MCF 10A (cell line): ENCODE measurements at regions of chr1 and their contacts with region 1.

Region 1: GRCh38 chr1:182143154-182143657 is 81.7 kb upstream of the ZNF648 start:
- DNase-seq: peak; percentile 94
- H3K4me3 Mint-ChIP-seq: peak overlapping the region; percentile 28
- H3K27ac Mint-ChIP-seq: peak overlapping the region; percentile 97
- H3K4me1 Mint-ChIP-seq: peaks cover 53% of the 10 kb centered on the region
- H3K27me3 Mint-ChIP-seq: no peaks in the 10 kb centered on the region
- CTCF ChIP-seq: peak; percentile 95

Region 2: DNA sequence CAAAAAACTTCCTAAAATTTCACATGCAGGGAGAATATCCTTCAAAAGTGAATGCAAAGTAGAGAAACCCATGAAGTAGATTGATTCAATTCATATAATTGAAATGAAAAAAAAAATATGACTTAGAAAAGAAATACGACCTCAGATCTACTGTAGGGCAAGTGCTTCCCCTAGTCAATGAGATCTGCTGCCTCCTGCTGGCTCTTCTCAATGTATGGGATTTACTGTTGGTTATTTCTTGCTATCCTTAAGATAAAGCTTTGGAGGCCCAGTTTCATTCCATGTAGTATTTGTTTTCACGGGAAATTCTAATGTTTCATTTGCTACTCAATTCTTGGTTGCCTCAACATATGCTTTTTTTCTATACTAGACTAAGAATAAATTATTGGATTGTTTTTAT is 127.8 kb before region 1 on chr1:
- CTCF ChIA-PET with region 1: no interaction called
- POLR2A ChIA-PET with region 1: no interaction called
- intact Hi-C with region 1: no loop called
- DNase-seq: no peak
- H3K4me3 Mint-ChIP-seq: no peak overlapping the region
- H3K27ac Mint-ChIP-seq: no peak overlapping the region
- H3K4me1 Mint-ChIP-seq: no peaks in the 10 kb centered on the region
- H3K27me3 Mint-ChIP-seq: no peaks in the 10 kb centered on the region
- CTCF ChIP-seq: no peak

Region 3: DNA sequence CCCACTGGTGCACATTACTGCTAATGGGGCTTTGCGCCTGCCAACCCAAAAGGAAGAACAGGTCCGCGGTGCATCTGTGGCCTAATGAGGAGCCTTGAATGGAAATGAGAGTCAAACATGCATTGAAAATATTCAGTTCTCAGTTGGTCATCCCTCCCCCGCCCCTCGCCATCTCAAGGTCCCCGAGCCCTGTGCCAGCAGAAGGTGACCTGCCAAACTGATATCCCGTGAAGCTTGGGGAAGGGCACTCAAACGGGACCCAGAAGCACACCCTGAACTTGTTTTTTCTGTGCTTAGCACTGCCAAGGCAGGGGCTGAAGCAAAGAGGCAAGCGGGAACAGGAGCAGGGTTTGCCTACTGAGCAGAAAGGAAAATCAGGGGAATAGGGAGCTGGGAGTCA is 13.8 kb before region 1 on chr1:
- CTCF ChIA-PET with region 1: interaction called, 51 read pairs
- POLR2A ChIA-PET with region 1: interaction called, 7 read pairs
- intact Hi-C with region 1: no loop called
- DNase-seq: no peak
- H3K4me3 Mint-ChIP-seq: no peak overlapping the region
- H3K27ac Mint-ChIP-seq: no peak overlapping the region
- H3K4me1 Mint-ChIP-seq: no peaks in the 10 kb centered on the region
- H3K27me3 Mint-ChIP-seq: no peaks in the 10 kb centered on the region
- CTCF ChIP-seq: no peak

Region 4: DNA sequence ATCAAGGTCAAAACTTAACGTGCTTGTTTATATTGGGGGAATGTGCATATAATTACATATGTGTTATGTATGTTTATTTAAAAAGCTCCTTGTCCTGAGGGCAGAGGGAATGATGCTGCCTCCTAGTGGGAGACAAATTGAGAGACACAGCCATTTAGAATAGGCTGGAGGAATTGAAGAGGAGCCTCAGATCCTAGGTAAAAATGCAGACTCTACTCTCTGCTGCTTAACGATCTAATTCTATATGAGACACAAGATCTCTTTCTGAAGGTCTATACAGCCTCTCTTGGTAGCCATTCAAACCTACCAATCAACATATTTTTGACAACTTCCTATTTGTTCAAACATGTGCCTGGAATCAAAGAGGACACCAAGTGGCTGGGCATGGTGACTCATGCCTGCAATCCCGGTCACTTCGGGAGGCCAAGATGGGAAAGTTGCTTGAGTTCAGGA is 54.9 kb after region 1 on chr1:
- CTCF ChIA-PET with region 1: interaction called, 163 read pairs
- POLR2A ChIA-PET with region 1: interaction called, 306 read pairs
- intact Hi-C with region 1: loop called (anchors 1 kb)
- DNase-seq: peak; percentile 62
- H3K4me3 Mint-ChIP-seq: peak overlapping the region; percentile 15
- H3K27ac Mint-ChIP-seq: peak overlapping the region; percentile 94
- H3K4me1 Mint-ChIP-seq: peaks cover 56% of the 10 kb centered on the region
- H3K27me3 Mint-ChIP-seq: no peaks in the 10 kb centered on the region
- CTCF ChIP-seq: peak; percentile 20

Region 5: GRCh38 chr1:182291584-182292192 is 148.5 kb after region 1 on chr1:
- CTCF ChIA-PET with region 1: interaction called, 55 read pairs
- POLR2A ChIA-PET with region 1: interaction called, 100 read pairs
- intact Hi-C with region 1: loop called (anchors 2 kb)
- DNase-seq: no peak
- H3K4me3 Mint-ChIP-seq: no peak overlapping the region
- H3K27ac Mint-ChIP-seq: peak overlapping the region; percentile 36
- H3K4me1 Mint-ChIP-seq: peaks cover 31% of the 10 kb centered on the region
- H3K27me3 Mint-ChIP-seq: no peaks in the 10 kb centered on the region
- CTCF ChIP-seq: no peak

Region 6: GRCh38 chr1:182374101-182374834 is 231.1 kb after region 1 on chr1:
- CTCF ChIA-PET with region 1: interaction called, 91 read pairs
- POLR2A ChIA-PET with region 1: interaction called, 7 read pairs
- intact Hi-C with region 1: no loop called
- DNase-seq: no peak
- H3K4me3 Mint-ChIP-seq: no peak overlapping the region
- H3K27ac Mint-ChIP-seq: no peak overlapping the region
- H3K4me1 Mint-ChIP-seq: peaks cover 7% of the 10 kb centered on the region
- H3K27me3 Mint-ChIP-seq: no peaks in the 10 kb centered on the region
- CTCF ChIP-seq: no peak

Region 7: DNA sequence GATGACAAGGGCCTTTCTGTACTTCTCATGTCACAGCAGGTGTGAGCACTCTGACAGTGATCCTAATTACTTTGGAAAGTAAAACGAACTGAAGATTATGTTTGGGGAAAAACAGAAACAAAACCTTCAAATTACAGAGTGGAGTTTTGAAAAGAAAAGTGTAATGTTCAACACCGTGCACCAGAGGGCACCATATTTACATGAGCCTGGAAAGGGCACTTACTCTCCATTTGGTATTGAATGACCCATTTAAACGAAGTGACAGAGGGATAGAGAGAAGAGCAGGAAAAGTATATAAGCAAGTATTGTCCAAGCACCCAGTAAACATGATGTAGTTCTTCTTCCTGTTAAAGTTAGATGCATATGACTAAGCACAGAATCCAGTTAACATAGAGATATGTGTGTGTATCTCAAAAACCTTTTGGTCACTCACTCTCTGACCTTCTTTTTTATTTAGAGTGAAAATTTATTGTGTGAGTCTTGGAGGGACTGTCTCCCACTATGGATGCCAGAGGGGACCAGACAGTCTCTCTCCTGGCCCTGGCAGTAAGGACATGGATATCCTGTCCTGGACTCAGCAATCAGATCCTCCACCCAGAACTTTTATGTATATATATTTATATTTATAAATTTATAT is 302.9 kb after region 1 on chr1:
- CTCF ChIA-PET with region 1: no interaction called
- POLR2A ChIA-PET with region 1: no interaction called
- intact Hi-C with region 1: loop called (anchors 1 kb)
- DNase-seq: peak; percentile 81
- H3K4me3 Mint-ChIP-seq: no peak overlapping the region
- H3K27ac Mint-ChIP-seq: no peak overlapping the region
- H3K4me1 Mint-ChIP-seq: peaks cover 6% of the 10 kb centered on the region
- H3K27me3 Mint-ChIP-seq: no peaks in the 10 kb centered on the region
- CTCF ChIP-seq: peak; percentile 89

Region 8: GRCh38 chr1:182643706-182644105 is 500.5 kb after region 1 on chr1:
- CTCF ChIA-PET with region 1: no interaction called
- POLR2A ChIA-PET with region 1: no interaction called
- intact Hi-C with region 1: no loop called
- DNase-seq: peak; percentile 81
- H3K4me3 Mint-ChIP-seq: no peak overlapping the region
- H3K27ac Mint-ChIP-seq: peak overlapping the region; percentile 95
- H3K4me1 Mint-ChIP-seq: peaks cover 8% of the 10 kb centered on the region
- H3K27me3 Mint-ChIP-seq: no peaks in the 10 kb centered on the region
- CTCF ChIP-seq: no peak